AG04449 (cell line): ENCODE measurements at regions of chr9 and their contacts with region 1.

Region 1: GRCh38 chr9:72827950-72828731 is 124.7 kb downstream of the ALDH1A1 start:
- DNase-seq: no peak
- H3K4me3 ChIP-seq: no peak overlapping the region
- CTCF ChIP-seq: no peak

Region 2: DNA sequence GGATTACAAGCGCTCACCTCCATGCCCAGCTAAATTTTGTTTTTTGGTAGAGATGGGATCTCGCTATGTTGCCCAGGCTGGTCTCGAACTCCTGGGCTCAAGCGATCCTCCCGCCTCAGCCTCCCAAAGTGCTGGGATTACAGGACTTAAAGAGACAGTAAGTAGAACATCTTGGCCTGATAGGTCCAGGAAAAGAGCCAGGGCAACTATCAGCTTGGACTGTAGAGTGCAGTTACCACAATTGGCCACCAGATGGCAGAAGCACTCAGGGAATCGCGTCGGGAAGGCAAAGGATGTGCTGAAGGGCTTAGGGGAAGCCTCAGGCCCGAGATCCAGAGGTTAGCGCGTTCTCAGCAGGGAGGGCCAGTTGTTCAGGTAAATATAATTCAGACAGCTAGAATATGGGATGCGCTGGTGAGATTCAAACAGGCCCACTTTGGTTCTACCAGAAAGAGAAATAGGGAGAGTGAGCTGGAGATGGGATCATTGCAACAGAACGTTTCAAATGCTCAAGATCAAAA is 789.2 kb before region 1 on chr9:
- CTCF ChIA-PET with region 1: interaction called, 33 read pairs
- POLR2A ChIA-PET with region 1: no interaction called
- DNase-seq: no peak
- H3K4me3 ChIP-seq: no peak overlapping the region
- CTCF ChIP-seq: peak; percentile 93

Region 3: DNA sequence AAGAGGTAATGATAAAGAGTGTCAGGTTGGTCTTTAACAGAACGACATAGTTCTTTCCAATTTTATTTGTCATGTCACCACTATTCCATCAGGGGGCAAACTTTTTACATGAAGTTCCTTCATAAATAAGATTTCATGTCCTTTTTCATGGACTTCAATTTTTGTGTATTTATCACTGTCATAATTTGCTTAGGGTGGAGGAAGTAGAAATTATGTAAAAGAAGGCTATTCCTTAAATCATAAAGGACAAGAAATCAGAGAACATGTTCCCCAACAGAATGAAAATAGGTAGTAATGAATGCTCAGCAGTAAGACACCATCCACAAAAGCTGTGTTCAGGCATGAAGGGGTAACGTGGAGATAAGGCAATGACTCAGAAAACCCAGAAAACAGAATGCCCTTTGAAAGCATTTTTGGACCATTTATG is 535.9 kb before region 1 on chr9:
- CTCF ChIA-PET with region 1: interaction called, 49 read pairs
- POLR2A ChIA-PET with region 1: no interaction called
- DNase-seq: no peak
- H3K4me3 ChIP-seq: no peak overlapping the region
- CTCF ChIP-seq: peak; percentile 14

Region 4: GRCh38 chr9:72807765-72808445 is 20.2 kb before region 1 on chr9:
- CTCF ChIA-PET with region 1: interaction called, 13 read pairs
- POLR2A ChIA-PET with region 1: no interaction called
- DNase-seq: no peak
- H3K4me3 ChIP-seq: no peak overlapping the region
- CTCF ChIP-seq: no peak

Region 5: DNA sequence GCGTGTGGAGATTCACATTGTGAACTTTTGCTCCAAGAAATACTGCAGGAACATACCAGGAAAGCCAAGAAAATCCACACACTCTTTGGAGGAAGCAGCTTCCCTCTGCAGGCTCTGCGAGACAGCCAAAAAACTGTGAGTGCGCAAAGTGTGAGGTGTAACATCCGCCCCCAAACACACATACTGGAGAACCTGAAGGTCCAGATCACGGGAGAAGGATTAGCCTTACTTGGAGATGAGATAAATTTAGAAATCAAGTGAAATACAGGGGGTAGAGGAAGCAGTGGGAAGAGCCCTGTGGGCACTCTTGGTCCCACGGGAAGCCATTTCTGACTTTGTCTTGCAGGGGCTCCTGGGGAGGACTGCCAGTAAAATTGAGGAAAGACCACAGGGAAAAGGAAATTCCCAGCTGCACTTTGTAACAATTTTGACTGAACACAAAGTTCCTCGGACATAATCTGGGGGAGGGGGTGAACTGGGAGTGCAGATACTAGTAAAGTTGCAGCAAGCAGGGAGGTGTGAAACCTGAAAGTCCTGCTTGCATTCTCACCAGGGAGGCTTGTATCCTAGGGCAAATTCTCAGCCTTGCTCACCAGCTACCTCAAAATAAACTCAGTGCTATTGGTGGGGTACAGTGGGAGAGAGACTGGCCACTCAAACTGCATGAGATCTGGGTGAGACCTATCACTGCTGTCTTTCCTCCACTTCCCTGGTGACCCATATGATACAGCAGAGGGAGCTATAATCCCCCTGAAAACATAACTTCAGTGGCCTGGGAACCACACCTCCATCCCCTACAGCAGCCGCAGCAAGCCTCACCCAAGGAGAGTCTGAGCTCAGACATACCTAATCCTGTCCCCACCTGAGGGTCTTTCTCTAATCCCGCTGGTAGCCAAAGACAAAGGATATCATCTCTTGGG is 15.6 kb after region 1 on chr9:
- CTCF ChIA-PET with region 1: interaction called, 14 read pairs
- POLR2A ChIA-PET with region 1: no interaction called
- DNase-seq: no peak
- H3K4me3 ChIP-seq: no peak overlapping the region
- CTCF ChIP-seq: no peak

Region 6: GRCh38 chr9:72871685-72872084 is 43.5 kb after region 1 on chr9:
- CTCF ChIA-PET with region 1: no interaction called
- POLR2A ChIA-PET with region 1: no interaction called
- DNase-seq: no peak
- H3K4me3 ChIP-seq: no peak overlapping the region
- CTCF ChIP-seq: no peak

Region 7: DNA sequence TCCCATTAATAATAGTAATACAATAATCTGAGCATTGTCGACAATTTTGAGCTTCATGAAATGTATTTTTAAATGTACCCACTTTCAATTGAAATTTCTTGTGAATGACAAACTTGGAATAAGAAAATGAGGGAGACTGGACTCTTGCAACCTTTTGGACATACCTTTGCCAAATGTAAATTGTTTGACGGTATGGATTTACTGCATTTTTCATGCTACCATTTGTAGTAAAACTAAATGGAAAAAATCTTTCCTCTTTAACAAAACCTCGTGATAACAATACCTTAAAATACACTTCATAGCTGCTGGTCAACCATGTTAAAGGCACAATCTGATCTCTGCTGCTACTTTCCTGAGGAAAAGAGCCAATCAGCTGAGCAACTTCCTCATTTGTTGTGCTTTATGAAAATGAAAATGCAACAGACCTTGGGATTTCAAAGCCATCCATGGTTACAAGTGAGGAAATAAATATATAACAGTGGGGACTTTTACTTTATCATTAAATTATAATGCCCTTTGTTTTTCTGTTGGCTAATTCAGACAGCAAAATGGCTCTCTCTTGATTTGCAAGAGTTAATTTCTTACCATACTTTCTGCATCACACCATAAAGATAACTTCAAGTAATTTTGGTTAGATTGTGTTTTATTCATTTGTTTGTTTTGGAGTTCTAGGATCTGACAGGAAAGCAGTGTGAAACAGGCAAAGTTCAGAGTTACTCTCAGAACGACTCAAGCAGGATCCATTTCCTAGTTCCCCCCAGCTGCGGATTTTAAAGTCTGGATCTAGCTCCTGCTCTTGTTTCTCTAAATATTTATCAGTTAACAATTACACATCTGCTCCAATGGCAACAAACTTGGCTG is 123.6 kb after region 1 on chr9:
- CTCF ChIA-PET with region 1: no interaction called
- POLR2A ChIA-PET with region 1: no interaction called
- DNase-seq: no peak
- H3K4me3 ChIP-seq: no peak overlapping the region
- CTCF ChIP-seq: no peak

Region 8: GRCh38 chr9:73011181-73011750 is 183.1 kb after region 1 on chr9:
- CTCF ChIA-PET with region 1: no interaction called
- POLR2A ChIA-PET with region 1: no interaction called
- DNase-seq: no peak
- H3K4me3 ChIP-seq: no peak overlapping the region
- CTCF ChIP-seq: no peak